ENCODE measurements at regions of chrX and their contacts with region 1.

Region 1: DNA sequence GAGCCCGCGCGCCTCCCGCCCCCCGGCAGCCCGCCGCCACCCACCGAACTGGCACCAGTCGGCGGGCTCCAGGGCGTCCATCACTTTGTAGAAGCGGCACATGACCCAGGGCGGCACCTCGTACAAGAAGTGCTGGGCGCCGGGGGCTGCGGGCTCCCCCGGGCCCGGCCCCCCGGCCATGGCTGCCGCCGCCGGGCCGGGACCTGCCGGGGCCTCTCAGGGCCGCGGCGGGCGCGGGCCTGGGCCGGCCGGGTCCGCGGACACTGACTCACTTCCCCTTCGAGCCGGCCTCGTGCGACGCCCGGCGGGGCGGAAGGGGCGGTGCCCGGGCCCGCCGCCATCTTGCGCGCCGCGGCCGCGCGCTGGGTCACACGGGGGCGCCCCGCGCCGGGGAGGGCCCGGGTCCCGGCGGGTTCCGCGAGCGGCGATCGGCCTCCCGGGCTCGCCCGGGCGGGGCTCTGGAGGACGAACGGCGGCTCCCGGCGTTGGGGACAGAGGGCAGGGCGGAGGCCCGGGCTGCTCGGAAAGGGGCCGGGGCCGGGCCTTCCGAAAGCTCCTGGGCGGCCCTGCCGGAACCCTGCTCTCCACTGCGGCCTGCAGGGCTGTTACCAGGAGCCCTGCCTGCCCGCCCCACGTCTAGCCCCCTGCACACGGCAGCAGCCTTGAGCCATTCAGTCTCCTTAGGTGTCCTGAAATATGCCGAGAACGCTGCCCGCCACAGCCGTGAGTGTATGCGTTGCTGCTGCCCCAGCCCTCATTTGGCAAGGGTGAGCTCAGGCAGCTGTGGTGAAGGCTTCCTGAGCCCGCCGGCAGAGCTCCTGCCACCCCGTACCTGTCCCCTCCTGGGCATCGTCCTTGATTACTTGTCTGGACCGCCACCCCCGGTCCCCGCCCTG is at the start of gene IRAK1:
- DNase-seq: no peak
- total RNA-seq, gene IRAK1: 30.6 TPM

Region 2: DNA sequence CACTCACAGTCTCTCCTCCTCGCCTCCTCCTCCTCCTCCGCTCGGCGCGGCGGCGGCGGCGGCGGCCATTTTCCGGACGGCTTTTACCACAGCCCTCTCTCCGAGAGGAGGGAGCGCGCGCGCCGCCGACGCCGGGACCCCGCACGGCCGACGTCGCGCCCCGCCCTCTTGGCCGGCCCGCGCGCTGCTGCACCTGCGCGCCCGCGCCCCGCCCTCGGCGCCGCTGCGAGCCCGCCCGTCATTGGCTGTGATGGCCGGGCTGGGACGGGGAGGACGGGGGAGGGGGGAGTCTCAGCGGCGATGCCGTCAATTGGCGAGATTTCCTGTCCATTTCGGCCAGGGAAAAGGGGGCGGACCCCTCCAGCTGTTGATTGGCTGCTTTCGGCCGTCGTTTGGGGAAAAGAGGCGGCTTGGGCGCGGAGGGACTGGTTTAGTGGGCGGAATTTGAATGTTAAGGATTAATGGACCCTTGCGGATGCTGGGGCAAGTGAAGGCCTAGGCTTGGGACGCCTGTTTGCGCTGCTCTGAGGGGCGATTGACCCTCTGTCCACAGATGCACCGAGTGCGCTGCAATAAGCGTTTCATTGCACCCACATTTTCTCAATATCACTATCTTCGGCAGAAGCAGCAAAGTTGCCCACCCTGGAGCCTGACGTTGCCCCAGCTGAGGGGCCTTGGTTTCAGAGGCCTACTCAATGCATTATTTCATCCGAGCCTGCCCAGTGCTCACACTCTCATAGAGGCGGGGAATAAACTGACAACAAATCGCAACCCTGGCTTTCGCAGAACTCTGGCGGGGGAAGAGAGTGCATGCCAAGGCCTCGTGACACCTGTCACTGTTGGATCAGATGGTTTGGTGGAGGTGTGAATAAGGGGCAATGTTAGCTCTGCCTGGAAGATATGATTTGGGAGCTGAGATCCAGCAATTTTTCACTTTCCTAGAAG is 78.0 kb after region 1 on chrX and contains the start of gene MECP2:
- intact Hi-C with region 1: loop called (anchors 5 kb)
- DNase-seq: peak; percentile 96
- total RNA-seq, gene MECP2: 37.6 TPM